Natural killer cell (primary cell): ENCODE measurements at regions of chr17 and their contacts with region 1.

Region 1: GRCh38 chr17:46841561-46842379 is 9.6 kb upstream of the WNT9B start:
- DNase-seq: peak; percentile 23 to 56
- ATAC-seq: peak in 2 of 3 donors; percentile 32 to 58
- H3K4me3 ChIP-seq: no peak overlapping the region
- H3K4me3 Mint-ChIP-seq: no peak overlapping the region
- H3K27ac ChIP-seq: no peak overlapping the region
- H3K27ac Mint-ChIP-seq: no peak overlapping the region
- H3K4me1 ChIP-seq: no peaks in the 10 kb centered on the region
- H3K4me1 Mint-ChIP-seq: peaks cover 0 to 5% of the 10 kb centered on the region in 2 donors
- H3K27me3 ChIP-seq: peaks cover 12% of the 10 kb centered on the region
- H3K27me3 Mint-ChIP-seq: peaks cover 30 to 32% of the 10 kb centered on the region in 2 donors
- CTCF ChIP-seq: peak; percentile 72

Region 2: GRCh38 chr17:46940621-46941404 is 99.0 kb after region 1 on chr17:
- intact Hi-C with region 1: loop called (anchors 2 kb)
- DNase-seq: peak; percentile 43 to 78
- ATAC-seq: peak; percentile 75 to 77 (median 76)
- H3K4me3 ChIP-seq: no peak overlapping the region
- H3K4me3 Mint-ChIP-seq: no peak overlapping the region
- H3K27ac ChIP-seq: no peak overlapping the region
- H3K27ac Mint-ChIP-seq: peak overlapping the region; percentile 33 to 36
- H3K4me1 ChIP-seq: peaks cover 32% of the 10 kb centered on the region
- H3K4me1 Mint-ChIP-seq: peaks cover 22 to 27% of the 10 kb centered on the region in 2 donors
- H3K27me3 ChIP-seq: no peaks in the 10 kb centered on the region
- H3K27me3 Mint-ChIP-seq: no peaks in the 10 kb centered on the region
- CTCF ChIP-seq: peak; percentile 58

Region 3: DNA sequence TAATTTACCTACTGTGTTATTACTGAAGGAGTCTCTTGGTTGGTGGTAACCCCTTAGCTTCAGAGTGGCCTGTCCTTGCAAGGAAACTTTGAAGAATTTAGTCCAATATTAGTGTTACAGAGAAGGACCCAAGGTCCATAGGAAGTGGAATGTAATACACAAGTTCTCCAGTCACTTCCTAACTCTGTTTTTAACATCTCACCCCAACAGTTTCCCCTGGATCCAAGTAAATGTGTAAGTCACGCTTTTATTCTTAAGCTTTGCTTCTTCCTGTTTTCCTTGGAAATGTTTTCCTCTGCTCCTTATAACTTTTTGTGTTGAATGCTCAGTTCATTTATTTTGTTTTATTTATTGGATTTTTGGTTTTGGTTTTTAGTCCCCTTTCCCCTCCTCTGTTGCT is 163.1 kb after region 1 on chr17:
- intact Hi-C with region 1: loop called (anchors 5 kb)
- DNase-seq: no peak
- ATAC-seq: no peak
- H3K4me3 ChIP-seq: no peak overlapping the region
- H3K4me3 Mint-ChIP-seq: no peak overlapping the region
- H3K27ac ChIP-seq: no peak overlapping the region
- H3K27ac Mint-ChIP-seq: no peak overlapping the region
- H3K4me1 ChIP-seq: no peaks in the 10 kb centered on the region
- H3K4me1 Mint-ChIP-seq: peaks cover 0 to 6% of the 10 kb centered on the region in 2 donors
- H3K27me3 ChIP-seq: no peaks in the 10 kb centered on the region
- H3K27me3 Mint-ChIP-seq: no peaks in the 10 kb centered on the region
- CTCF ChIP-seq: no peak

Region 4: GRCh38 chr17:48047741-48048383 is 1206.1 kb after region 1 on chr17 and contains the start of gene NFE2L1:
- intact Hi-C with region 1: no loop called
- DNase-seq: peak; percentile 97 to 99
- ATAC-seq: peak; percentile 93 to 99 (median 95)
- H3K4me3 ChIP-seq: peak within 1 kb of the TSS; percentile 69
- H3K4me3 Mint-ChIP-seq: peak within 1 kb of the TSS; percentile 98
- H3K27ac ChIP-seq: peak within 1 kb of the TSS; percentile 88
- H3K27ac Mint-ChIP-seq: peak within 1 kb of the TSS; percentile 96 to 97
- H3K4me1 ChIP-seq: peaks cover 32% of the 10 kb centered on the region
- H3K4me1 Mint-ChIP-seq: peaks cover 55 to 64% of the 10 kb centered on the region in 2 donors
- H3K27me3 ChIP-seq: no peaks in the 10 kb centered on the region
- H3K27me3 Mint-ChIP-seq: no peaks in the 10 kb centered on the region
- CTCF ChIP-seq: no peak
- total RNA-seq, gene NFE2L1: 38.6 to 53.4 (median 47.5) TPM